ENCODE measurements at regions of chr9 and their contacts with region 1.

Region 1: GRCh38 chr9:131310833-131311554 is 21.5 kb downstream of the PLPP7 start:
- DNase-seq: peak; percentile 89
- H3K4me3 Mint-ChIP-seq: peak overlapping the region; percentile 39
- H3K27ac Mint-ChIP-seq: no peak overlapping the region
- H3K4me1 Mint-ChIP-seq: peaks cover 12% of the 10 kb centered on the region
- H3K27me3 Mint-ChIP-seq: no peaks in the 10 kb centered on the region

Region 2: DNA sequence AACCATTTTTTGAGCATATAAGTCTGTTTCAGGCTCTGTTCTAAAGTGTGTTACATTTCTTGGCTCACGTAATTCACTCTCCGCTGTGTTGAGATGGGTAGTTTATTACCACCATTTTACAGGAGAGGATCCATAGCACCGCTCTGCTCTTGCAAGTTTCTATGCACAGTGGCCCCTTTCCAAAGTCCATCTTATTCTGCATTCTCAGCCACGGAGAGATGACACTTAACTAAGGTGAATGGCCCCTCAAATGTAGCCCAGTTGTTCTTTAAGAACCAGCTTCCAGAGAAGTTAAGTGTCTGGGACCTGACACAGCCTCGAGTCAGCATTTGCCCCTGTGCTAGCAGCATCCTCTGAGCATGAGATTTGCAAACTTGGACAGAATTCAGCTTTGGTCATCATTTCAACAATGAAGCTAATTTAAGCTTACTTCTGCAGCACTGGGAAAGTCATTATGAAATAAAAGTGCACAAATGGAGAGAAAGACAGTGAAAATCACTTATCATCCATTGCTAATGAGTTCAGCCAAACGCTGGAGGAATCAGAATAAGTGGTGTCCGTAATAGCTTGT is 96.6 kb before region 1 on chr9:
- CTCF ChIA-PET with region 1: no interaction called
- intact Hi-C with region 1: no loop called
- DNase-seq: no peak
- H3K4me3 Mint-ChIP-seq: no peak overlapping the region
- H3K27ac Mint-ChIP-seq: no peak overlapping the region
- H3K4me1 Mint-ChIP-seq: peaks cover 5% of the 10 kb centered on the region
- H3K27me3 Mint-ChIP-seq: no peaks in the 10 kb centered on the region

Region 3: DNA sequence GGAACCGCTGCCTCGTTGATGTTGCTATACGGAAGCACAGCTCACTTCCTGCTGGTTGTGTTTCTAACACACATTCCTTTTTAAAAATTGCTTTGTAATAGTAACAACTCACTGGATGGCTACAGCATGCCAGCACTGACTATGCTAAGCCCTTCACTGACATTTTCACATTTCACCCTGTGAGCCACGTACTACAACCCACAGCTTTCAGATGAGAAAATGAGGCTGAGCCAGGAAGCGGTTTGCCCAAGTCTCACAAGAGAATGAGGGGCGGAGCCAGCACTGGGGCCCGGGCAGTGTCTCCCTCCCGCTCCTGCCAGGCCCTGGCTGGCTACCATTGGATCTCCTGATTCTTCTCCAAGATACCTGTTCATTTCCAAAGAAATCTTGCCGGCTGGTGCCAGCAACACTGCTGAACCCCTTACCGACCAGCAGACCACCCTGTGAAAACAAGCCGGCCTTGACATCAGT is 73.0 kb before region 1 on chr9:
- CTCF ChIA-PET with region 1: no interaction called
- intact Hi-C with region 1: loop called (anchors 1 kb)
- DNase-seq: peak; percentile 95
- H3K4me3 Mint-ChIP-seq: peak overlapping the region; percentile 66
- H3K27ac Mint-ChIP-seq: peak overlapping the region; percentile 95
- H3K4me1 Mint-ChIP-seq: peaks cover 34% of the 10 kb centered on the region
- H3K27me3 Mint-ChIP-seq: no peaks in the 10 kb centered on the region

Region 4: GRCh38 chr9:131297903-131298302 is 13.1 kb before region 1 on chr9:
- CTCF ChIA-PET with region 1: no interaction called
- intact Hi-C with region 1: no loop called
- DNase-seq: no peak
- H3K4me3 Mint-ChIP-seq: no peak overlapping the region
- H3K27ac Mint-ChIP-seq: no peak overlapping the region
- H3K4me1 Mint-ChIP-seq: no peaks in the 10 kb centered on the region
- H3K27me3 Mint-ChIP-seq: no peaks in the 10 kb centered on the region